PC-3 (cell line): ENCODE measurements at regions of chr3 and their contacts with region 1.

Region 1: DNA sequence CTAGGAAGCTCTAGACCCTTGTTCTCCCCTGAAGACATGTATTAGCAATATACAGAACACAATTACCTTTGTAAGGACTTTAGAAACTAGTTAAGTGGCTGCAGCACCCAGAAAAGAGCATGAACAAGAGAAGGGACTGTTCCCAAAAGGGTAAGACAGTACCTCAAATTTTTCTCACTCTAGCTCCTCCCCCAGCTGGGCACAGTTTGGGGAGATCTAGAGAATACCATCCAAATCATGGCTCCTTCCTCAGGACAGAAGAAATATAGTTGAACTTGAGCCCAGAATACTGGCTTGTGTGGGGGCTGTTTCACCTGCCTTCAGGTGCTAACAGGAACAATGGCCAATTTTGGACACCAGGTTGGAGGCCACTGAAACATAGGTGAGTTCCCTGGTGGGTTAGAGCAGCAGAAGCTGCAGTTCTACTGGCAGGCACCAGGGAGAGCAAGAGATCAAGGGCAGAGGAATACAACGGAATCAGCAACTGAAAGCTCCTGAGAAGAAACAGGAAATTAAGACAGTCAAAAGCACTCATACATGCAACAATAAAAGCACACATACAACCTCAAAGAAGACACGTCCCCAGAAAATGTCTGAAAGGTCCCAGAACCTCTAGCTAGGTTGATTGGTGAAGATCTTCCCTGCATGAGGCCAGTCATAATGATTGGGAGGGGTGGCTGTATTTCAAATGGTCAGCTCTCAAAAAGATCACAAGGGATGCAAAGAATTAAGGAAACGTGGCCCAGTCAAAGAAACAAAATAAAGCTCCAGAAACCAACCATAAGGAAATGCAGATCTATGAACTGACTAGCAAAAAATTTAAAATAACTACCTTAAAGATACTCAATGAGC is 104.9 kb upstream of the ASB14 start:
- DNase-seq: peak; percentile 78
- ATAC-seq: peak; percentile 99
- H3K4me3 ChIP-seq: no peak overlapping the region
- H3K27ac ChIP-seq: no peak overlapping the region
- H3K4me1 ChIP-seq: no peaks in the 10 kb centered on the region
- H3K27me3 ChIP-seq: no peaks in the 10 kb centered on the region
- CTCF ChIP-seq: peak; percentile 95

Region 2: DNA sequence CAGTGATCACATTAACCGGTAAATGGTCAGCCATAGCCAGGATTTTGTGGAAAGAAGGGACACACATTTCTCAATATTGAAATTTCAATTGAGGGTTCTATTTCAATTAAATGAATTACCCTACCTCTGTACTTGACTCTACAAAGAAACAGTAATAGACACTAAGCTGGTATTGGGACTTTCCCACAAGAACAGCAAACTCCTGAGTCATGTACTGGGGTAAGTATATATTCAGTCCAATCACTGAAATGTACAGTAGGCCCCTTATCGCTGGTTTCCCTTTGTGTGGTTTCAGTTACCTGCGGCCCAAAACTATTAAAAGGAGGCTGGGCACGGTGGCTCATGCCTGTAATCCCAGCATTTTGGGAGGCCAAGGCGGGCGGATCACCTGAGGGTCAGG is 122.6 kb before region 1 on chr3:
- CTCF ChIA-PET with region 1: no interaction called
- POLR2A ChIA-PET with region 1: no interaction called
- intact Hi-C with region 1: no loop called
- DNase-seq: no peak
- ATAC-seq: no peak
- H3K4me3 ChIP-seq: no peak overlapping the region
- H3K27ac ChIP-seq: no peak overlapping the region
- H3K4me1 ChIP-seq: no peaks in the 10 kb centered on the region
- H3K27me3 ChIP-seq: no peaks in the 10 kb centered on the region
- CTCF ChIP-seq: no peak

Region 3: DNA sequence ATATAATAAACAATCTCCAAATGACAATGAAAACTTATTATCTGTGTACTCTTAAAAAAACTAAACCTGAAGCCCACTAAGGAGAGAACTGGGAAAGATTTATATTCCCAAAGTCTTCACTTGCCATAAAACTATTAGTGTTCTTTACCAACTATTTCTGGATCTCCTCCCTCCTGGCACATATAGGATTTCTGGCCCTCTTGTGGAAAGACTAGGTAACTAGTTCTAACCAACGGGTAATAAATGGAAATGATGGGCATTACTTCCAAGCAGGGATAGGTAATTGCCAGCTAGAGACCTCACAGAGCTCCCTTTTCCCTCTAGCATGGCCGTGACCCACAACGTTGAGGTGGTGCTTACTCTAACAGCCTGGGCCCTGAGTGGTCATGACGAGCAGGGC is 36.6 kb after region 1 on chr3:
- CTCF ChIA-PET with region 1: interaction called, 7 read pairs
- POLR2A ChIA-PET with region 1: no interaction called
- intact Hi-C with region 1: loop called (anchors 1 kb)
- DNase-seq: peak; percentile 84
- ATAC-seq: peak; percentile 92
- H3K4me3 ChIP-seq: no peak overlapping the region
- H3K27ac ChIP-seq: no peak overlapping the region
- H3K4me1 ChIP-seq: no peaks in the 10 kb centered on the region
- H3K27me3 ChIP-seq: no peaks in the 10 kb centered on the region
- CTCF ChIP-seq: peak; percentile 80

Region 4: DNA sequence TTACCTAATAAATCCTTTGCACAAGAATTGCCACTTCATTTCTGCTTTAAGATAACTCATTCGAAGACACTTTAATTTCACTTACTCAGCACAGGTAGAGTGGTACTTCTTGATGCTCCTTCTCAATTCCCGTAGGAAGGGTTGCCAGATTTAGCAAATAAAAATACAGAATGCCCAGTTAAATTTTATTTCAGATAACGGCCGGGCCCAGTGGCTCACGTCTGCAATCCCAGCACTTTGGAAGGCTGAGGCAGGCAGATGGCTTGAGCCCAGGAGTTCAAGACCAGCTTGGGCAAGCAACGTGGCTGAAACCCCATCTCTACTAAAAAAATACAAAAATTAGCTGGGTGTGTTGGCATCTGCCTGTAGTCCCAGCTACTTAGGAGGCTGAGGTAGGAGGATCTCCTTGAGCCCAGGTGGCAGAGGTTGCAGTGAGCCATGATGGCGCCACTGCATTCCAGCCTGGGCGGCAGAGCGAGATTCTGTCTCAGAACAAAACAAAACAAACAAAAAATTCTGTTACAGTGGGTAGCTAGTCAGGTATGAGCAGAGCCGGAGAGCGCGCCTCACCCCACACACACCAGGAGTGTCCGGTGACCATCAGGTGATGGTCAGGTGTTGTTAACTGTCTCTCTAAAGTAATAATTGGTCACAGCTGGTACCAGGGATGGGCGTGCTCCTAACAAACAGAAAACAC is 53.9 kb after region 1 on chr3:
- CTCF ChIA-PET with region 1: no interaction called
- POLR2A ChIA-PET with region 1: no interaction called
- intact Hi-C with region 1: no loop called
- DNase-seq: no peak
- ATAC-seq: no peak; the same call in 1 of the 2 replicates
- H3K4me3 ChIP-seq: no peak overlapping the region
- H3K27ac ChIP-seq: peak overlapping the region; percentile 35
- H3K4me1 ChIP-seq: peaks cover 19% of the 10 kb centered on the region
- H3K27me3 ChIP-seq: no peaks in the 10 kb centered on the region
- CTCF ChIP-seq: no peak